B cell (primary cell): ENCODE measurements at regions of chr4 and their contacts with region 1.

Region 1: GRCh38 chr4:85637778-85638177 is 162.8 kb downstream of the ARHGAP24 start:
- DNase-seq: no peak
- ATAC-seq: no peak
- H3K4me3 ChIP-seq: no peak overlapping the region
- H3K4me3 Mint-ChIP-seq: no peak overlapping the region
- H3K27ac ChIP-seq: no peak overlapping the region
- H3K27ac Mint-ChIP-seq: no peak overlapping the region
- H3K4me1 ChIP-seq: peaks cover 15 to 17% of the 10 kb centered on the region in 2 donors
- H3K4me1 Mint-ChIP-seq: peaks cover 27% of the 10 kb centered on the region
- H3K27me3 ChIP-seq: no peaks in the 10 kb centered on the region
- H3K27me3 Mint-ChIP-seq: no peaks in the 10 kb centered on the region
- CTCF ChIP-seq: no peak

Region 2: GRCh38 chr4:85595794-85596559 is 41.8 kb before region 1 on chr4:
- CTCF ChIA-PET with region 1: no interaction called
- POLR2A ChIA-PET with region 1: no interaction called
- intact Hi-C with region 1: loop called (anchors 5 kb)
- DNase-seq: no peak
- ATAC-seq: no peak
- H3K4me3 ChIP-seq: no peak overlapping the region
- H3K4me3 Mint-ChIP-seq: no peak overlapping the region
- H3K27ac ChIP-seq: no peak overlapping the region
- H3K27ac Mint-ChIP-seq: no peak overlapping the region
- H3K4me1 ChIP-seq: peaks cover 12 to 28% of the 10 kb centered on the region in 2 donors
- H3K4me1 Mint-ChIP-seq: peaks cover 30% of the 10 kb centered on the region
- H3K27me3 ChIP-seq: no peaks in the 10 kb centered on the region
- H3K27me3 Mint-ChIP-seq: no peaks in the 10 kb centered on the region
- CTCF ChIP-seq: no peak

Region 3: DNA sequence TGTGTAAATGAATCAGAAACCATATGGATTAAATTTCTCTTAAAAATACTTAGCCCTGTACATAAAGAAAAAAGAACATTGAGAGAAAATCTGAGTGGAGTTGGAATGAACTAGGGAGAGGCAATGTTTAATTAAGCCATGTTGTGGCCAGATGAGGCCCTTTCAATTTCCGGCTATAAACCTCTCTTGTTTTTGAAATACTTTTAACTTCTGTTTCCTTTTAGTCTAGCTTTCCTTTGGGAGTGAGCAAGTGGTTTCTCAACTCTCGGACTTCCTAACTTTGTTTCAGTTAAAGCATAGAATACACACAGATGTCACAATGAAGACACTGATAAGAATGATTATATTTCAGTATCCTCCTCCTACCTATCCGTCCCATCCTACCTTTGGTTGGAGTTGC is 34.3 kb after region 1 on chr4:
- CTCF ChIA-PET with region 1: no interaction called
- POLR2A ChIA-PET with region 1: no interaction called
- intact Hi-C with region 1: no loop called
- DNase-seq: no peak
- ATAC-seq: no peak
- H3K4me3 ChIP-seq: peak overlapping the region in 1 of 5 experiments; percentile 22
- H3K4me3 Mint-ChIP-seq: peak overlapping the region; percentile 35
- H3K27ac ChIP-seq: peak overlapping the region; percentile 42 to 65
- H3K27ac Mint-ChIP-seq: peak overlapping the region; percentile 51
- H3K4me1 ChIP-seq: peaks cover 69 to 72% of the 10 kb centered on the region in 2 donors
- H3K4me1 Mint-ChIP-seq: peaks cover 76% of the 10 kb centered on the region
- H3K27me3 ChIP-seq: no peaks in the 10 kb centered on the region
- H3K27me3 Mint-ChIP-seq: no peaks in the 10 kb centered on the region
- CTCF ChIP-seq: no peak